ENCODE measurements at regions of chr11 and their contacts with region 1.

Region 1: DNA sequence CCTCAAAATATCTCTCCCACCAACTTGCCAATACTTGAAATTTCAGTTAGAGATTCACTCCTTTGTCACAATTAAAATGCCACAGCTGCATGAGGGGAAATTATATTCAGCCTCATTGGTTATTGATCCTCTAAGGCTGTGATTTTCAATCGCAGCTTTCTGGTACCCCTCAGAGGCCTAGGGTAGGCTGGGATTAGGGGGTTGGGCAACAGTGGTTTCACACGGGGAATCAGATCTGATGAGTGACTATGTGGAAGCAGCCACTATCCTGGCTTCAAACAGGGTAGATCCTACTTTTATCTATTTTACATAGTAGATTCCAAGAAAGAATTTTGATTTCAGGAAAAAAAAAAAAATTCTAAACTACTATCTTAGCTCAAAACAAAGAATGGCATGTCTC is 252.5 kb downstream of the DCDC1 start:
- DNase-seq: no peak
- H3K4me3 Mint-ChIP-seq: no peak overlapping the region
- H3K27ac Mint-ChIP-seq: no peak overlapping the region
- H3K4me1 Mint-ChIP-seq: no peaks in the 10 kb centered on the region
- H3K27me3 Mint-ChIP-seq: no peaks in the 10 kb centered on the region

Region 2: GRCh38 chr11:31089117-31089516 is 27.9 kb before region 1 on chr11:
- intact Hi-C with region 1: loop called (anchors 1 kb)
- DNase-seq: no peak
- H3K4me3 Mint-ChIP-seq: no peak overlapping the region
- H3K27ac Mint-ChIP-seq: no peak overlapping the region
- H3K4me1 Mint-ChIP-seq: no peaks in the 10 kb centered on the region
- H3K27me3 Mint-ChIP-seq: no peaks in the 10 kb centered on the region

Region 3: GRCh38 chr11:31173926-31174680 is 57.1 kb after region 1 on chr11:
- intact Hi-C with region 1: no loop called
- DNase-seq: no peak
- H3K4me3 Mint-ChIP-seq: no peak overlapping the region
- H3K27ac Mint-ChIP-seq: no peak overlapping the region
- H3K4me1 Mint-ChIP-seq: no peaks in the 10 kb centered on the region
- H3K27me3 Mint-ChIP-seq: no peaks in the 10 kb centered on the region

Region 4: GRCh38 chr11:31240338-31240904 is 123.4 kb after region 1 on chr11:
- intact Hi-C with region 1: no loop called
- DNase-seq: no peak
- H3K4me3 Mint-ChIP-seq: no peak overlapping the region
- H3K27ac Mint-ChIP-seq: no peak overlapping the region
- H3K4me1 Mint-ChIP-seq: no peaks in the 10 kb centered on the region
- H3K27me3 Mint-ChIP-seq: no peaks in the 10 kb centered on the region

Measured in activated T-helper 2 cell treated with anti-CD3 and anti-CD28 coated beads, Interferon-gamma antibody, Interleukin-2, Interleukin-4, amounts not matched to agents 10 μg/mL and 5 μg/mL and 100 μg/mL, durations not matched to agents 14 hours and 24 hours and 36 hours (primary cell).